ENCODE measurements at regions of chr6 and their contacts with region 1.

Region 1: DNA sequence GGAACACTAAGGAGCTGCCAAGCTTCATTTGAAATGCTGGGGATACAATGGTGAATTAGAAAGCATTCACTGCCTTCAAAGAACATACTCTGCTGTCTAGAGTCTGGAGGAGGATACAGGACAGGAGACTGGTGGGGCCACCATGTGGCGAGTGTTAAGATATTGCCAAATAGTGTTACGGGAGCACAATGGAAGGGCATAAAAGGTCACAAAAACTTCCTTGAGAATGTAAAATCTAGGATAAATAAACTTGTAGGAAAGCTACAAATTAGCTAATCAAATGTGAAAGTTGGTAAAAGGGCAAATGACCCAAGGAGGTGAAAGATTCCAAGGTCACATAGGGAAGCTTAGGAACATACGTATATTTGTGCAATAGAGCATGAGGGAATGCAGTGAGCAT is 271.7 kb downstream of the RFPL4B start:
- DNase-seq: peak in 1 of 2 experiments; percentile 37
- H3K4me3 ChIP-seq: no peak overlapping the region
- H3K4me3 Mint-ChIP-seq: no peak overlapping the region
- H3K27ac Mint-ChIP-seq: no peak overlapping the region
- H3K4me1 ChIP-seq: no peaks in the 10 kb centered on the region
- H3K4me1 Mint-ChIP-seq: no peaks in the 10 kb centered on the region
- H3K27me3 ChIP-seq: no peaks in the 10 kb centered on the region
- H3K27me3 Mint-ChIP-seq: no peaks in the 10 kb centered on the region
- CTCF ChIP-seq: peak in 1 of 2 experiments; percentile 44

Region 2: DNA sequence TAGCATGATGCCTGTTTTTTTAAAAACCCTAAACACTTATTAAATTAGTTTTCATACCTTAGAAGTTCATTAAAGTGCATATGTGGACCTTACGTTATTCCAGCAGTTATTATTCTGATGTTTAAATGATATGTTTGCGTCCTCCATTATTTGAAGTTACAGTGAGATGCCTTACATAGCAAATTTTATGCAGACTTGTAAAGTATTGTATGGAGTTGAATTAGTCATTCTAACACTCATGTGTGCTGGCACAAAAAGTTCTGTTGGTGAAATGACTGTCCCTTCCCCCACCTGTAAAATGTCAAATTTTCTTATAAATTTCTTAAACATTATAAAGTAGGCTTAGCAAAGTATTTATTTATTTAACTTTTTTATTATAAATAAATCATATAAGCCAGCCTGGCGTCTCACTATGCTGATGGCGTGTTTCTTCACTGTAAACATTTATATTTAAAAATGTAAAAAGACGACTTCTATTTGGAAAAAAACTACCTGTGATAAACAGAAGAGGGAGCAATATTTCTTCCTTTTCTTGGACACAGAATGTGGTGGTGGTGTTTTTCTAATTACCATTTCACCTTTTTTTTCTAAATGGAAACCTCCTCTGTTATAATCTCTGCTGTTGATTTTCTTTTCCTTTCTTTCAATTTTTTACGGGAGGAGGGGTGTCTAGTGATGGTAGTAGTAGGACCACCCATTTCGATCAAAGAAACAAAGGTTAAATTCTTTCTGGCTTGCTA is 116.3 kb before region 1 on chr6:
- CTCF ChIA-PET with region 1: no interaction called
- POLR2A ChIA-PET with region 1: no interaction called
- intact Hi-C with region 1: loop called (anchors 2 kb)
- DNase-seq: no peak
- H3K4me3 ChIP-seq: no peak overlapping the region
- H3K4me3 Mint-ChIP-seq: no peak overlapping the region
- H3K27ac Mint-ChIP-seq: no peak overlapping the region
- H3K4me1 ChIP-seq: no peaks in the 10 kb centered on the region
- H3K4me1 Mint-ChIP-seq: no peaks in the 10 kb centered on the region
- H3K27me3 ChIP-seq: no peaks in the 10 kb centered on the region
- H3K27me3 Mint-ChIP-seq: no peaks in the 10 kb centered on the region
- CTCF ChIP-seq: peak; percentile 5 to 16

Region 3: DNA sequence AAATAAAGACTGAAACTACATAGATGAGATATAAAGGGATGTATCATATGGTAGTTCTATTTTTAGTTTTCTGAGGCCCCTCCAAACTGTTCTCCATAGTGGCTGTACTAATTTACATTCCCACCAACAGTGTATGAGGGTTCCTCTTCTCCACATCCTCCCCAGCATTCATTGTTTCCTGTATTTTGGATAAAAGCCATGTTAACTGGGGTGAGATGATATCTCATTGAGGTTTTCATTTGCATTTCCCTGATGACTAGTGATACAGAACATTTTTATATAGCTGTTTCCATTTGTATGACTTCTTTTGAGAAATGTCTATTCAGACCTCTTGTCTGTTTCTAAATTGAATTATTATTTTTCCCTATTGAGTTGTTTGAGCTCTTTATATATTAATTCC is 42.4 kb before region 1 on chr6:
- CTCF ChIA-PET with region 1: no interaction called
- POLR2A ChIA-PET with region 1: no interaction called
- intact Hi-C with region 1: no loop called
- DNase-seq: no peak
- H3K4me3 ChIP-seq: no peak overlapping the region
- H3K4me3 Mint-ChIP-seq: no peak overlapping the region
- H3K27ac Mint-ChIP-seq: no peak overlapping the region
- H3K4me1 ChIP-seq: no peaks in the 10 kb centered on the region
- H3K4me1 Mint-ChIP-seq: no peaks in the 10 kb centered on the region
- H3K27me3 ChIP-seq: no peaks in the 10 kb centered on the region
- H3K27me3 Mint-ChIP-seq: peaks cover 3% of the 10 kb centered on the region
- CTCF ChIP-seq: no peak

Measured in Caco-2 (cell line).